ENCODE measurements at regions of chr11 and their contacts with region 1.

Region 1: GRCh38 chr11:47241841-47242301 is 6.7 kb downstream of the ACP2 start:
- DNase-seq: no peak

Region 2: GRCh38 chr11:45485070-45485707 is 1756.7 kb before region 1 on chr11:
- intact Hi-C with region 1: no loop called
- DNase-seq: peak; percentile 29

Region 3: DNA sequence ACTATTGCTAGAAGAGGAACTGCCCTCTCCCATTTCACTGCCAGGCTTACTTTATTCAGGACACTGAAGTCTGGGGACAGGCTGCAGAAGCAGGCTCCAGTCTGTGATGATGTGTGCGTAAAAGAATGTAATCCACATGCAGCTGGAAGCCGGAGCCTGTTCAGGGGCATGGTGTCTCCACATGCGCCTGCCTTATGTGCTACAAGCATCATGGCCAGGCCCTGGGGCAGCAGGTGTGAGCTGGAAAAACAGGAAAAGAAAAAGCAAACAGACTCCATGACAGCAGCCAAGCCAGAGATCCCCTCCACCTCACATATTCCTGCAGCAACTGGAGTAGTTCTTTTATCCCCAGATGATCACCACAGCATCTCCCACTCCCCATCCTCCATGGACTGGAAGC is 98.5 kb before region 1 on chr11:
- intact Hi-C with region 1: no loop called
- DNase-seq: no peak

Region 4: DNA sequence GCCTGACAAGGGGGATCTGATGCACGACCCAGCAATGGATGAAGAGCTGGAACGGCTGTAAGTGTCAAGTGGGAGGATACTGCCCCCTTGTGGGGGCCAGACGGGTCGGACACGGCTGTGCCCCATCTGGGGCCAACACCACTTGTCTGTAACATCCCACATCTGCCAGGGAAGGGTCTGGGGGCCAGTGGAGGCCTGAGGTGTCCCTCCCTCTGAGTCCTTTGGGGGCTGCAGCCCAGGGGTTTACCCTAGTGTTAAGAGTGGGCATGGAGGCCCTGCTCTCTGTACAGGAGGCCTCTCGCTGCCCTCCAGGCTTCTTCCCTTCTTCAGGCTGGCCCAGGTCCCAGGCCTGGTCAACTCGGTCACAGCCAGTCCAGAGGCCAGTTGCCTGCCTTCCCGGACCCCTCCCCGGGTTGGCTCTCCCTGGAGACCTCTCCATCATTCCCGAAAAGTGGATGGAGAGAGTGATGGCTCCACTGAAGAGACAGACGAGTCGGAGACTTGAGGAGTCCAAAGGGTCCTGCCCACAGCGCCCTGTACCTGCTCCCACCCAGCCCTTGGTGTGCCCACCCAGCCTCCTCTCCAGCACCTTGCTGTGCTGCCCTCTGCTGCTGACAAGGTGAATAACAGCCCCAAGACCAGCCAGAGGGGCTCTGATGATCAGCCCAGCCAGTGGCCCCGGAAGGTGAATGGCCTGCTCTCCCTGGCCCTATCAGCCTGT is 80.6 kb before region 1 on chr11:
- intact Hi-C with region 1: no loop called
- DNase-seq: peak; percentile 92

Region 5: GRCh38 chr11:47204637-47204989 is 37.3 kb before region 1 on chr11:
- intact Hi-C with region 1: loop called in 1 of 2 experiments (anchors 1 kb)
- DNase-seq: no peak